PC-9 (cell line): ENCODE measurements at regions of chr3 and their contacts with region 1.

Region 1: GRCh38 chr3:112642912-112643506 is 2.1 kb upstream of the CCDC80 start:
- DNase-seq: peak; percentile 70 to 87
- H3K4me3 ChIP-seq: no peak overlapping the region
- H3K27ac ChIP-seq: 0 out of 2 replicates have a peak overlapping the region, but pooled peaks have one; percentile 16
- H3K4me1 ChIP-seq: peaks cover 76% of the 10 kb centered on the region
- H3K27me3 ChIP-seq: no peaks in the 10 kb centered on the region
- CTCF ChIP-seq: peak; percentile 91

Region 2: DNA sequence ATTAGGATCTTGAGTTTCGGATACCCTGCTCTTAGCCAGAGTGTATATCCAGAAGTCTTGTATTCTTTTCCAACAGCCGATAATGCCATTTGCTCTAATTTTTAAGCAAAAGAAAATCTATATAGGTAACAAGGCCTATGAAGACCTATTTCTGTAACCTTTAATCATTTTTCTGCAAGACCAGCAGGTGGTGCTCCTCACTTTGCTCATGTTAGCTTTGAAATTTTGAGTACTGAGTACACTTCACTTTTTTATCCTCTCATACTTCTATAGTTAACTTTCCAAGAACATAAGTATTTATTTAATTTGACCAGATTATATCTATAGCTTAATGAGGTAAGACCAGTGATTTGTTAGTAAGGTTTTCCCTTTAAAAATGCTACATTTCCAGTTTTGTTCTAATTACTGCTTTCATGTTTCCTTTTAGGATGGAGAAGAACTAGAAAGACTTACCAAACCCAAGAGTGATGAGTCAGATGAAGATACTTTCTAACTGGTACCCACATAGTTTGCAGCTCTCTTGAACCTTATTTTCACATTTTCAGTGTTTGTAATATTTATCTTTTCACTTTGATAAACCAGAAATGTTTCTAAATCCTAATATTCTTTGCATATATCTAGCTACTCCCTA is 60.6 kb before region 1 on chr3:
- CTCF ChIA-PET with region 1: interaction called, 6 read pairs
- POLR2A ChIA-PET with region 1: interaction called, 8 read pairs
- intact Hi-C with region 1: loop called (anchors 1 kb)
- DNase-seq: peak; percentile 47 to 55
- H3K4me3 ChIP-seq: no peak overlapping the region
- H3K27ac ChIP-seq: no peak overlapping the region
- H3K4me1 ChIP-seq: no peaks in the 10 kb centered on the region
- H3K27me3 ChIP-seq: no peaks in the 10 kb centered on the region
- CTCF ChIP-seq: peak; percentile 83

Region 3: DNA sequence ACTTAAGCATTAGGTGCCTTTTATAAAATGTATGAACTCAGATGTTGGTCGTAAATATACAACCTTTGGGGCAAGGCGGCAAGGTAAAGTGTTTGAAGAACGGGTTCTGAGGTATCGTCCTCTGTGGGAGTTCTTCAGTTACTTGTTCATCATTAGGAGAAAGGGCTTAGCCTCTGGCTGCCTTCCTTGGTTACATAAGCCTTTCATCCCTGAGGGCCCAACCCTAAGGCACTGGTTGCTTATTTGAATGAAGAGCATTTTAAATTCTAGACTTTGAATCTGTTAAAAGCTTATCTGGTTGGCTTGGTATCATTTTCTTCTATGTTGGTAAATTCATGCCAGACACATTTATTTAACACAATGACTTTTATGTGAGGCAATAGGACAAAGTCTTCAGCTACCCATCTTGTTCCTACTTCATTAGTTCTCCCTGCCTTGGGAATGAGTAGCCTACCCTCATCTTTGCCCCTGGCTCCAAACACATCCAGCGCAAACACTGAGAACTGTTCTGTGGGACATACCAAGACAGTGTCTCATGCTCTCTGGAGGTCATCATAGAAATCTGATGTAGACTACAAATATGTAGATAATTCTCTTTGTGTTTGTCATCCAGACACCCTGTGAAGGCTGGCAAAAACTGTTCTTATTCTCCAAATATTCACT is 10.3 kb after region 1 on chr3:
- CTCF ChIA-PET with region 1: interaction called, 9 read pairs
- POLR2A ChIA-PET with region 1: interaction called, 10 read pairs
- intact Hi-C with region 1: no loop called
- DNase-seq: peak; percentile 76 to 96
- H3K4me3 ChIP-seq: no peak overlapping the region
- H3K27ac ChIP-seq: peak overlapping the region; percentile 92
- H3K4me1 ChIP-seq: peaks cover 55% of the 10 kb centered on the region
- H3K27me3 ChIP-seq: no peaks in the 10 kb centered on the region
- CTCF ChIP-seq: no peak

Region 4: DNA sequence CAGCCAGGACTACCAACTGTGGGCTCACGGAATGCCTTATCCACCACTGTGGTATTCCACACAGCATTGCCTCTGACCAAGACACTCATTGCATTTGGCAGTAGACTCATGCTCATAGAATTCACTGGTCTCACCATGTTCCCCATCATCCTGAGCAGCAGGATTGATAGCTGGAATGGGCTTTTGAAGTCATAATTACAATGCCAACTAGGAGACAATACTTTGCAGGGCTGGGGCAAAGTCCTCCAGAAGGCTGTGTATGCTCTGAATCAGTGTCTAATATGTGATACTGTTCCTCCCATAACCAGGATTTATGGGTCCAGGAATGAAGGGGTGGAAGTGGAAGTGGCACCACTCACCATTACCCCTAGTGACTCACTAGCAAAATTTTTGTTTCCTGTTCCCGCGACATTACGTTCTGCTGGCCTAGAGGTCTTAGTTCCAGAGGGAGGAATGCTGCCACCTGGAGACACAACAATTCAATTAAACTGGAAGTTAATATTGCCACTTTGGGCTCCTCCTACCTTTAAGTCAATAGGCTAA is 56.5 kb after region 1 on chr3:
- CTCF ChIA-PET with region 1: no interaction called
- POLR2A ChIA-PET with region 1: interaction called, 6 read pairs
- intact Hi-C with region 1: loop called (anchors 1 kb)
- DNase-seq: peak in 1 of 2 experiments; percentile 47
- H3K4me3 ChIP-seq: no peak overlapping the region
- H3K27ac ChIP-seq: no peak overlapping the region
- H3K4me1 ChIP-seq: peaks cover 5% of the 10 kb centered on the region; the same call in 1 of the 2 replicates
- H3K27me3 ChIP-seq: no peaks in the 10 kb centered on the region
- CTCF ChIP-seq: 0 out of 2 replicates have a peak, but pooled peaks have one; percentile 29

Region 5: DNA sequence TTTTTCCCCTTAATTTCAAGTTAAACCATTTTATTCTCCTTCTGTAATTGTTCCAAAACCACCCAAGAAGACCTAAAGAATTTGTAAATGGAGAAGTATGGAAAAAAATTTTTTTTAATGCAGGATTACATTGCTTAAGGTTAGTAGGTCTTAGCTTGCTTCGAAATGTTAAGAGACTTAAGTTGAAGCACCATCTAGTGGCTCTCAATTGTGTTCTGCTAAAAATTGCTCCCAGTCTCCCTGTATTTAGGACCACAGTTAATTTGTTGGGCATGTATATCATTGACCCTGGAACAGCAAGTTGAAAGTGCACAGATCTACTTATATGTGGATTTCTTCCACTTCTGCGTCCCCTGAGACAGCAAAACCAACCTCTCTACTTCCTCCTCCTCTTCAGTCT is 171.3 kb after region 1 on chr3:
- CTCF ChIA-PET with region 1: interaction called, 6 read pairs
- POLR2A ChIA-PET with region 1: interaction called, 6 read pairs
- intact Hi-C with region 1: loop called (anchors 1 kb)
- DNase-seq: peak; percentile 15 to 68
- H3K4me3 ChIP-seq: no peak overlapping the region
- H3K27ac ChIP-seq: peak overlapping the region; percentile 39
- H3K4me1 ChIP-seq: peaks cover 33% of the 10 kb centered on the region
- H3K27me3 ChIP-seq: no peaks in the 10 kb centered on the region
- CTCF ChIP-seq: peak; percentile 73

Region 6: DNA sequence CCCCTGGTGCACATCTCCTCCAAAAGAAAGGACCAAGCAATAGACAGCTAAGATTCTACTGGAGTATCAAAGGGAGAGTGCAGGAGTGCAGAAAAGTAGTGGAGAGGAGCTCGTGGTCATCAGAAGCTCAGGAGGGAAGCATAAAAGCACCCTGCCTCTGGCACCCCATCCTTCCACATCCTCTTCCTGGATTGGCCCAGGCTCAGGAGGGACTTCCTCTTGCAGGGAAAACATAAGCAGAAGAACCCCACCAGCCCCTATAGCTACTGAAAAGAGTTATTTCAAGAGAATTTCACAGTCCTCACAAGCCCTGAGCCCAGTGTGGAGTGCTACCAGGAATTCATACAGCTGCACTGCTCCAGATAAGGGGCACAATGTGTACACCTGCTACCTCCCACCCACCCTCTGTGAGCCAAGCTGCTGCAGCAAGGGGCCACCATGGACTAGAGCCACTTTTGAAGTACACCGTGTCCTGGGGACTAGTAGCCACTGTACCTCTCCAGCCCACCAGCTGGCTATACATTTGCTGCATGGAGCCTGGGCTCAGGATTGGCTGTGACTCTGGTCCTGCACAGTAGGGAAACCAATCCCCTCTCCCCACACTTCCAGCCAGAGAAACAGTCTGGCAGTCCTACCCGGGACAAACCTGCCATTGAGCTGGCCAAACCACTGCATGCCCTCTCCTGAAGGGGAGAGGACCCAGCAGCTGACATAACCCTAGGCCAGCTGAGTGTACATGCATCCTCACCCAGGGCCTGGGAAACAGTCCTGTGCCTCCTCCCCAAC is 288.9 kb after region 1 on chr3:
- CTCF ChIA-PET with region 1: no interaction called
- POLR2A ChIA-PET with region 1: no interaction called
- intact Hi-C with region 1: no loop called
- DNase-seq: no peak
- H3K4me3 ChIP-seq: no peak overlapping the region
- H3K27ac ChIP-seq: no peak overlapping the region
- H3K4me1 ChIP-seq: no peaks in the 10 kb centered on the region
- H3K27me3 ChIP-seq: no peaks in the 10 kb centered on the region
- CTCF ChIP-seq: no peak

Region 7: GRCh38 chr3:113051302-113051711 is 408.3 kb after region 1 on chr3:
- CTCF ChIA-PET with region 1: no interaction called
- POLR2A ChIA-PET with region 1: no interaction called
- intact Hi-C with region 1: loop called (anchors 1 kb)
- DNase-seq: peak; percentile 63 to 82
- H3K4me3 ChIP-seq: no peak overlapping the region
- H3K27ac ChIP-seq: no peak overlapping the region
- H3K4me1 ChIP-seq: no peaks in the 10 kb centered on the region; the same call in 1 of the 2 replicates
- H3K27me3 ChIP-seq: no peaks in the 10 kb centered on the region
- CTCF ChIP-seq: peak; percentile 94